Spleen (tissue), 13 donors: ENCODE measurements at regions of chr2 and their contacts with region 1.

Region 1: GRCh38 chr2:161273038-161273760 is 35.0 kb upstream of the PSMD14 start:
- DNase-seq: no peak
- H3K4me3 ChIP-seq: no peak overlapping the region
- H3K27ac ChIP-seq: no peak overlapping the region
- H3K4me1 ChIP-seq: no peaks in the 10 kb centered on the region
- H3K27me3 ChIP-seq: no peaks in the 10 kb centered on the region
- CTCF ChIP-seq: peak in 10 of 11 experiments; percentile 32 to 81 (median 74)
- POLR2A ChIP-seq: no peak

Region 2: DNA sequence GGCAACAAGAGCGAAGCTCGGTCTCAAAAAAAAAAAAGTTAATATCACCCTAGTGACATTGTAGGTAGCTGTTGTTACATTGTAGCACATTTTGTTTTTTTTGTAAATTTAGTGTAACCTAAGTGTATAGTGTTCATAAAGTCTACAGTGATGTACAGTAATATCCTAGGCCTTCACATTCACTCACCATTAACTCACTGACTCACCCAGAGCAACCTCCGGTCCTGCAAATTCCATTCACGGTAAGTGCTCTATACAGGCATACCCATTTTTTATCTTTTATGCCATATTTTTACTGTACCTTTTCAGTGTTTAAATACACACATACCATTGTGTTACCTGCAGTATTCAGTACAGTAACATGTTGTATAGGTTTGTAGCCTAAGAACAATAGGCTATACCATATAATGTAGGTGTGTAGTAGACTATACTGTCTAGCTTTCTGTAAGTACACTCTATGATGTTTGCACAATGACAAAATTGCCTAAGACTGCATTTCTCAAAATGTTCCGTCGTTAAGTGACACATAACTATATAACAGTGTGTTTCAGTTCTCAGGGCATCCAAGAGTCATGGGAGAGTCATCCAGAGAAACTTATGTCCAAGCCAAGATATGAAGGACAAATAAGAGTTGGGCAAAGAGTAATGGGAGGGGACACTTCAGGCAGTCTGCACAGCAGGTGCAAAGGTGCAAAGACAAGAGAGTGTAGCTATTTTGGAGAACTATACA is 44.5 kb before region 1 on chr2:
- intact Hi-C with region 1: loop called (anchors 5 kb)
- DNase-seq: no peak
- H3K4me3 ChIP-seq: no peak overlapping the region
- H3K27ac ChIP-seq: no peak overlapping the region
- H3K4me1 ChIP-seq: peaks cover 0 to 18% (median 0%) of the 10 kb centered on the region in 6 donors
- H3K27me3 ChIP-seq: no peaks in the 10 kb centered on the region
- CTCF ChIP-seq: no peak
- POLR2A ChIP-seq: no peak

Region 3: GRCh38 chr2:161308178-161308955 is 35.2 kb after region 1 on chr2 and contains the start of gene PSMD14:
- intact Hi-C with region 1: no loop called
- DNase-seq: peak; percentile 98
- H3K4me3 ChIP-seq: peak within 1 kb of the TSS; percentile 60 to 96 (median 82)
- H3K27ac ChIP-seq: peak within 1 kb of the TSS; percentile 69 to 92 (median 86)
- H3K4me1 ChIP-seq: peaks cover 12 to 52% (median 28%) of the 10 kb centered on the region in 6 donors
- H3K27me3 ChIP-seq: no peaks in the 10 kb centered on the region
- CTCF ChIP-seq: peak in 1 of 11 experiments; percentile 18
- POLR2A ChIP-seq: peak in 2 of 3 donors; percentile 48 to 63
- total RNA-seq, gene PSMD14: 26.7 to 47.7 (median 28.8) TPM

Region 4: DNA sequence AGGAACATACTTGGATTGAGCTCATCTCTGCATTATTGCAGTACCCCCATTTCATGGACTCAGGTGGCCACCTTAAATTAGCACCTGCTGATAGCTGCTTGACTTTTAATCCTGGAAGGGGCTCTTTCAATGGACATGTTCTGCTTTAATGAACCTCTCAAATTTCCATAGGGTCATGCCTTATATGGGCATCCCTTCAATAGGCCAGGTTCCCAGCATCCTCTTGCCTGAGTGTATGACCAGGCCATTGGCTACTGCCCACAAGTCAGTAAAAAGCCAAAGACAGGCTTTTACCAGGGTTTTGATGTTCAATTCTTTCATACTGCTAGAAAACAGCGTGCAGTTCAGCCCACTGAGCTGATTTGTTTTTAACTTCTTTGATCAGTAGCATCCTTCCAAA is 466.6 kb after region 1 on chr2:
- intact Hi-C with region 1: no loop called
- DNase-seq: no peak
- H3K4me3 ChIP-seq: no peak overlapping the region
- H3K27ac ChIP-seq: no peak overlapping the region
- H3K4me1 ChIP-seq: no peaks in the 10 kb centered on the region
- H3K27me3 ChIP-seq: no peaks in the 10 kb centered on the region
- CTCF ChIP-seq: no peak
- POLR2A ChIP-seq: no peak